K562 (cell line): ENCODE measurements at regions of chr10 and their contacts with region 1.

Region 1: DNA sequence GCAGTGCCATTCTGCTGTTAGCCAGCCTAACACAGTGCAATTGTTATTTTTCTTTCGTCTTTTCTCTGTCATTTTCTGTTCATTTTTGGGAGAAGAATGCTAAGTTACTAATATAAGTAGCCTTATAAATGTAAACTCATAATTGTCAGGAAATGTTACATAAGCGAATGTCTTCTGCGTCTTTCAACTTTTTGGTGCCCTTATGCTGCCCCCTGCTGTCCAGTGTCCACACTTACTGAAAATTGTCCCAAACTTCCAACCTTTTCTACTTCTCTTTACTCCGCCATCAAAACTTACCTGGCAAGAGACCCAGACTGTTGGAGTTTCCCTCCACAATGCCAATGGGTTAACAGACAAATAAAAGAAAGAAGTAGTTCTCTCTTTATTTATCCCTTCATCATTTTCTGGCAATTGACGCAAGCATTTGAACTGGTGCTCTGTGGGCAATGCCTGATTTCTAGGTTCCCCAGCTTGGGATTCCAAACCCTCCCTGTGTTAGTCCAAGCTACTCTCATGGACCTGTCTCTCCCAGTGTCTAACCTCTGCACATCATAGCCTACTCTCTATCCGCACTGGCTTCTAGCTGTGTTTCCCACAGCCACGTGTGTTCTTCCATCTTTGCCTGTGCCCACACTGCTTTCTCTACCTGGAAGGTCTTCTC is 21.0 kb upstream of the EPC1 start:
- DNase-seq: peak; percentile 46 to 77 (median 48)
- ATAC-seq: peak; percentile 77
- H3K4me3 ChIP-seq: no peak overlapping the region
- H3K27ac ChIP-seq: no peak overlapping the region
- H3K4me1 ChIP-seq: no peaks in the 10 kb centered on the region
- H3K27me3 ChIP-seq: no peaks in the 10 kb centered on the region
- CTCF ChIP-seq: peak; percentile 67 to 85 (median 71)
- EP300 ChIP-seq: no peak
- POLR2A ChIP-seq: no peak
- RAD21 ChIP-seq: peak; percentile 66 to 71

Region 2: GRCh38 chr10:32190890-32191491 is 176.9 kb before region 1 on chr10:
- CTCF ChIA-PET with region 1: interaction called, 8 read pairs
- POLR2A ChIA-PET with region 1: no interaction called
- in situ Hi-C with region 1: no loop called
- intact Hi-C with region 1: loop called (anchors 2 kb)
- DNase-seq: peak in 1 of 4 experiments; percentile 50
- ATAC-seq: peak; percentile 59
- H3K4me3 ChIP-seq: no peak overlapping the region
- H3K27ac ChIP-seq: no peak overlapping the region
- H3K4me1 ChIP-seq: peaks cover 0 to 2% of the 10 kb centered on the region in 2 experiments; a peak in 1 of 5 replicates
- H3K27me3 ChIP-seq: peaks cover 0 to 2% of the 10 kb centered on the region in 2 experiments; a peak in 1 of 5 replicates
- CTCF ChIP-seq: peak; percentile 48 to 72 (median 50); a peak in 5 of 6 replicates
- EP300 ChIP-seq: no peak
- POLR2A ChIP-seq: no peak
- RAD21 ChIP-seq: peak; percentile 68 to 79

Region 3: DNA sequence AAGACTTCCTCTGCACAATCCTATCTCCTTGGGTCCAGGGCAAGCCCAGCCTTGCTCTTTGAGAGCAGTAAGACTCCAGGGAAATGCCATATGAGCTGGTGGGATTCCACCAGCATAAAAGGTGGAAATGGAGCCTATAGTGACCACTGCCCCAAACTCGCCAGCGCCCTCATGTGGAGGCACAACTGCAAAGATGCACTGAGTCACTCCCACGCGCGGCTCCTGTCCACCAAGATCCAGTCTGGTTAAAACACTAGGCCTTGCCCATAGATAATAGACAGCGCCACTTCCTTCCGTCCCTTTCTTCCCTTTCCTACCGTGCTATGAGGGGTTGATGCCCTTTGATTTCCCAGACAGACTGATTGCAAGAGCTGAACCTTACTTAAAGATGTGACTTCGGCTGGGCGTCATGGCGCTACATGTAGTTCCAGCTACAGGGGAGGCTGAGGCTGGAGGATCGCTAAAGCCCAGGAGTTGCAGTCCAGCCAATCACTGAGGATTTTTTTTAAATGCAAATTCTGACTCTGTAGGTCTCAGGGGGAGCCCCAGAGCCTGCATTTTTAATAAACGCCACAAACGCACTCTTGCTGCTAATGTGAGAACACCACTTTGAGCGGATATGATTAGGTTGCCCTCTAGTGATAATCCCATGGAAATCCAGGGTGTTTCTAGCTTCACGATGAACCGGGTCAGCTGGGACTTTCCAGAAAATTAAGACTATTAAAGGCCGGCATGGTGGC is 157.4 kb before region 1 on chr10:
- CTCF ChIA-PET with region 1: no interaction called
- POLR2A ChIA-PET with region 1: no interaction called
- in situ Hi-C with region 1: no loop called
- intact Hi-C with region 1: loop called (anchors 5 kb)
- DNase-seq: peak; percentile 17 to 59 (median 38)
- ATAC-seq: peak; percentile 87
- H3K4me3 ChIP-seq: no peak overlapping the region
- H3K27ac ChIP-seq: no peak overlapping the region
- H3K4me1 ChIP-seq: no peaks in the 10 kb centered on the region; a peak in 1 of 5 replicates
- H3K27me3 ChIP-seq: no peaks in the 10 kb centered on the region
- CTCF ChIP-seq: peak; percentile 49 to 89 (median 74)
- EP300 ChIP-seq: no peak
- POLR2A ChIP-seq: no peak
- RAD21 ChIP-seq: peak; percentile 49 to 59

Region 4: GRCh38 chr10:32256613-32257437 is 111.1 kb before region 1 on chr10:
- CTCF ChIA-PET with region 1: interaction called, 3 read pairs
- POLR2A ChIA-PET with region 1: no interaction called
- in situ Hi-C with region 1: loop called (anchors 10 kb)
- intact Hi-C with region 1: loop called (anchors 1 kb)
- DNase-seq: peak; percentile 56 to 78 (median 63)
- ATAC-seq: peak; percentile 80
- H3K4me3 ChIP-seq: no peak overlapping the region
- H3K27ac ChIP-seq: no peak overlapping the region
- H3K4me1 ChIP-seq: peaks cover 6 to 13% of the 10 kb centered on the region in 2 experiments; a peak in 2 of 5 replicates
- H3K27me3 ChIP-seq: no peaks in the 10 kb centered on the region
- CTCF ChIP-seq: peak; percentile 83 to 94 (median 89)
- EP300 ChIP-seq: no peak
- POLR2A ChIP-seq: no peak
- RAD21 ChIP-seq: peak; percentile 66 to 82

Region 5: GRCh38 chr10:32338262-32338661 is 29.7 kb before region 1 on chr10:
- CTCF ChIA-PET with region 1: no interaction called
- POLR2A ChIA-PET with region 1: no interaction called
- in situ Hi-C with region 1: no loop called
- intact Hi-C with region 1: no loop called
- DNase-seq: no peak
- ATAC-seq: no peak
- H3K4me3 ChIP-seq: no peak overlapping the region
- H3K27ac ChIP-seq: no peak overlapping the region
- H3K4me1 ChIP-seq: peaks cover 0 to 14% of the 10 kb centered on the region in 2 experiments; a peak in 2 of 5 replicates
- H3K27me3 ChIP-seq: no peaks in the 10 kb centered on the region
- CTCF ChIP-seq: no peak
- EP300 ChIP-seq: no peak
- POLR2A ChIP-seq: no peak
- RAD21 ChIP-seq: no peak

Region 6: GRCh38 chr10:32386623-32387260 is 18.8 kb after region 1 on chr10:
- CTCF ChIA-PET with region 1: no interaction called
- POLR2A ChIA-PET with region 1: no interaction called
- in situ Hi-C with region 1: no loop called
- intact Hi-C with region 1: no loop called
- DNase-seq: no peak
- ATAC-seq: peak; percentile 36; the same call in 1 of the 3 replicates
- H3K4me3 ChIP-seq: no peak overlapping the region
- H3K27ac ChIP-seq: no peak overlapping the region
- H3K4me1 ChIP-seq: no peaks in the 10 kb centered on the region
- H3K27me3 ChIP-seq: no peaks in the 10 kb centered on the region
- CTCF ChIP-seq: no peak
- EP300 ChIP-seq: no peak
- POLR2A ChIP-seq: no peak
- RAD21 ChIP-seq: no peak